ENCODE measurements at regions of chr14 and their contacts with region 1.

Region 1: GRCh38 chr14:96100161-96101029 is 61.2 kb downstream of the C14orf132 start:
- DNase-seq: peak; percentile 83
- ATAC-seq: peak; percentile 28
- H3K4me3 ChIP-seq: no peak overlapping the region
- H3K27ac ChIP-seq: peak overlapping the region; percentile 60
- H3K4me1 ChIP-seq: peaks cover 21% of the 10 kb centered on the region
- H3K27me3 ChIP-seq: no peaks in the 10 kb centered on the region
- CTCF ChIP-seq: peak; percentile 99
- POLR2A ChIP-seq: peak; percentile 76
- RAD21 ChIP-seq: peak; percentile 100

Region 2: GRCh38 chr14:95545179-95546168 is 554.9 kb before region 1 on chr14:
- CTCF ChIA-PET with region 1: no interaction called
- POLR2A ChIA-PET with region 1: no interaction called
- dilution Hi-C with region 1: no loop called
- in situ Hi-C with region 1: loop called (anchors 10 kb)
- intact Hi-C with region 1: no loop called
- DNase-seq: peak; percentile 97
- ATAC-seq: peak; percentile 61; the same call in 1 of the 2 replicates
- H3K4me3 ChIP-seq: no peak overlapping the region
- H3K27ac ChIP-seq: no peak overlapping the region
- H3K4me1 ChIP-seq: peaks cover 13% of the 10 kb centered on the region
- H3K27me3 ChIP-seq: no peaks in the 10 kb centered on the region
- CTCF ChIP-seq: no peak
- POLR2A ChIP-seq: no peak
- RAD21 ChIP-seq: no peak

Region 3: GRCh38 chr14:96001866-96002497 is 98.4 kb before region 1 on chr14:
- CTCF ChIA-PET with region 1: interaction called, 30 read pairs
- POLR2A ChIA-PET with region 1: no interaction called
- dilution Hi-C with region 1: no loop called
- in situ Hi-C with region 1: loop called (anchors 5 kb)
- intact Hi-C with region 1: loop called (anchors 1 kb)
- DNase-seq: peak; percentile 8
- ATAC-seq: peak; percentile 56
- H3K4me3 ChIP-seq: no peak overlapping the region
- H3K27ac ChIP-seq: no peak overlapping the region
- H3K4me1 ChIP-seq: no peaks in the 10 kb centered on the region
- H3K27me3 ChIP-seq: peaks cover 22% of the 10 kb centered on the region
- CTCF ChIP-seq: no peak
- POLR2A ChIP-seq: no peak
- RAD21 ChIP-seq: no peak

Region 4: GRCh38 chr14:96122496-96122895 is 22.1 kb after region 1 on chr14:
- CTCF ChIA-PET with region 1: interaction called, 5 read pairs
- POLR2A ChIA-PET with region 1: interaction called, 7 read pairs
- dilution Hi-C with region 1: no loop called
- in situ Hi-C with region 1: no loop called
- intact Hi-C with region 1: loop called (anchors 2 kb)
- DNase-seq: peak; percentile 90
- ATAC-seq: peak; percentile 82
- H3K4me3 ChIP-seq: no peak overlapping the region
- H3K27ac ChIP-seq: peak overlapping the region; percentile 95
- H3K4me1 ChIP-seq: peaks cover 29% of the 10 kb centered on the region
- H3K27me3 ChIP-seq: no peaks in the 10 kb centered on the region
- CTCF ChIP-seq: no peak
- POLR2A ChIP-seq: no peak
- RAD21 ChIP-seq: 0 out of 2 replicates have a peak, but pooled peaks have one; percentile 9

Region 5: DNA sequence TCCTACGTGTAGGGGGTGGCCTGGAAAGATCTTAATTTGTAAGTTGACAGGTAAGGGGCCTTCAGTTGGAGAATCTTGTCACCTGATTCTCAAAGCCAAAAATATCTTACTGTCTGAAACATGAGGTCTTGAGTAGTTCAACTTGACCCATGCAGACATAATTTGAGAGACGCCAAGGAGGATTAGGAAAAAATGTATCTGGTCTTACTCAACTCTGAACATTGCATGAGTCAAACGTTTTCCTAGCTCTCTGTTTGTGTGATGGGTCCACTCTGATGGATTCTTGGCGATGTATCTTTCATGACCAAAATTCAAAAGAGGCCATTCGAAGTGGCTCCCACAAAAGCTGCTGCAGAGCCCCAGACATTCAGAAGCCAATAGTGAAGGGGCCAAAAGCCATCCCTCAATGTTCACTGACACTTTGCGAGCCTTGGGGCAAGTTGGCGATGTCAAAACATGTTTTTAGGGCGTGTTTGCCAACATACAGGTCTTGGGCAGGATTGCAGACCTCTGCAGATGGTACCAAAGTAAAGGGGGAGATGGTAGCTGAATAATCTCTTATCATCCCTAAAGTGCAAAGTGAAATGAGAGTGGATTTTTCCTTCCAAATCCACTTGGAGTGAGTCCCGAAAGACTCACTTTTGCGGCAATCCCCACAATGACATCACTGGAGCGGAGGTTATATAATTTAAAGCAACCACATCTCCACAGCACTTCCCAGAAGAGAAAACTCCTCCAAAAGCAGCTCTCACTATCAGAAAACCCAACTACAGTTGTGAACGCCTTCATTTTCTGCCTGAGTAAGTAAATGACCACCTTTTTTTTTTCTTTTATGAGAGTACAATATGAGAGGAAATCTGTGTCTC is 155.3 kb after region 1 on chr14 and contains the start of gene BDKRB1:
- CTCF ChIA-PET with region 1: interaction called, 4 read pairs
- POLR2A ChIA-PET with region 1: interaction called, 10 read pairs
- dilution Hi-C with region 1: no loop called
- in situ Hi-C with region 1: no loop called
- intact Hi-C with region 1: loop called (anchors 5 kb)
- DNase-seq: peak; percentile 96
- ATAC-seq: peak; percentile 24
- H3K4me3 ChIP-seq: peak within 1 kb of the TSS; percentile 59
- H3K27ac ChIP-seq: peak within 1 kb of the TSS; percentile 92
- H3K4me1 ChIP-seq: peaks cover 34% of the 10 kb centered on the region
- H3K27me3 ChIP-seq: no peaks in the 10 kb centered on the region
- CTCF ChIP-seq: no peak
- POLR2A ChIP-seq: peak; percentile 97
- RAD21 ChIP-seq: no peak
- total RNA-seq, gene BDKRB1: 51.4 and 56.5 TPM in 2 replicates

Region 6: GRCh38 chr14:96424109-96424989 is 324.0 kb after region 1 on chr14:
- CTCF ChIA-PET with region 1: interaction called, 5 read pairs
- POLR2A ChIA-PET with region 1: no interaction called
- dilution Hi-C with region 1: no loop called
- in situ Hi-C with region 1: loop called (anchors 5 kb)
- intact Hi-C with region 1: no loop called
- DNase-seq: peak; percentile 74
- ATAC-seq: peak; percentile 96
- H3K4me3 ChIP-seq: peak overlapping the region; percentile 33
- H3K27ac ChIP-seq: no peak overlapping the region
- H3K4me1 ChIP-seq: peaks cover 2% of the 10 kb centered on the region; the same call in 1 of the 2 replicates
- H3K27me3 ChIP-seq: peaks cover 1% of the 10 kb centered on the region; the same call in 1 of the 2 replicates
- CTCF ChIP-seq: peak; percentile 90
- POLR2A ChIP-seq: no peak
- RAD21 ChIP-seq: peak; percentile 88

Measured in IMR-90 (cell line).